AG04449 (cell line): ENCODE measurements at regions of chr10 and their contacts with region 1.

Region 1: GRCh38 chr10:68208424-68209042 is 23.4 kb downstream of the ATOH7 start:
- DNase-seq: no peak
- H3K4me3 ChIP-seq: no peak overlapping the region
- CTCF ChIP-seq: peak; percentile 74

Region 2: GRCh38 chr10:67849331-67850011 is 359.1 kb before region 1 on chr10:
- CTCF ChIA-PET with region 1: interaction called, 44 read pairs
- POLR2A ChIA-PET with region 1: no interaction called
- DNase-seq: peak; percentile 69
- H3K4me3 ChIP-seq: peak overlapping the region; percentile 76
- CTCF ChIP-seq: no peak

Region 3: DNA sequence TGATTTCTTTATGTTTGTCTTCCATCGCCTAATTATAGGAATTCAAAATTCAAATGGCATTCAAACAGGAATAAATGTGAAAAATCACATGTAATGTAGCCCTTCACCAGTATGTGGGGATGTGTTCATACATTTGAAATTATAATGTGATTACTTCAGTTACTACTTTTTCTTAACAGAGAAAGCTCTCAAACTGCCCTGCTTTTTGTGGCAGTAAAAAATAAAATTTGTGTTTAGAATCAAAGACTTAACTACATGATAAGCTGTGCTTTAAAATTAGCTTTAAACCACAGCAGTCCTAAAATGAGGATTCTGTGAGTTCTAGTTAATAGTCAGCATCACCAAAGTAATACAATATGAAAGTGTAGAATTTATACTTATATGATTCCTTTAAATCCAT is 125.7 kb before region 1 on chr10:
- CTCF ChIA-PET with region 1: interaction called, 69 read pairs
- POLR2A ChIA-PET with region 1: no interaction called
- DNase-seq: no peak
- H3K4me3 ChIP-seq: no peak overlapping the region
- CTCF ChIP-seq: peak; percentile 53

Region 4: DNA sequence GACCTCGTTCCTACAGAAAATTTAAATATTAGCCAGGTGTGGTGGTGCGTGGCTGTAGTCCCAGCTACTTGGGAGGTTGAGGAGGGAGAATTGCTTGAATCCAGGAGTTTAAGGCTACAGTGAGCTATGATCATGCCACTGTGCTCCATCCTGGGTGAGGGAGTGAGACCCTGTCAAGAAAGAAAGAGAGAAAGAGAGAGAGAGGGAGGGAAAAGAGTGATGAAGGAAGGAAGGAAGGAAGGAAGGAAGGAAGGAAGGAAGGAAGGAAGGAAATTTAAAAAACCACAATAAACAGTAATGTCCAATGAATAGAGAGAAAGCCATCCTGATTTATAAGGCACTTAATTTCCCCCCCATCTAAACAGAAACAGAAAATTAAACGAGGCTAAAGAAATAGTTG is 89.9 kb before region 1 on chr10:
- CTCF ChIA-PET with region 1: no interaction called
- POLR2A ChIA-PET with region 1: no interaction called
- DNase-seq: no peak
- H3K4me3 ChIP-seq: no peak overlapping the region
- CTCF ChIP-seq: no peak

Region 5: DNA sequence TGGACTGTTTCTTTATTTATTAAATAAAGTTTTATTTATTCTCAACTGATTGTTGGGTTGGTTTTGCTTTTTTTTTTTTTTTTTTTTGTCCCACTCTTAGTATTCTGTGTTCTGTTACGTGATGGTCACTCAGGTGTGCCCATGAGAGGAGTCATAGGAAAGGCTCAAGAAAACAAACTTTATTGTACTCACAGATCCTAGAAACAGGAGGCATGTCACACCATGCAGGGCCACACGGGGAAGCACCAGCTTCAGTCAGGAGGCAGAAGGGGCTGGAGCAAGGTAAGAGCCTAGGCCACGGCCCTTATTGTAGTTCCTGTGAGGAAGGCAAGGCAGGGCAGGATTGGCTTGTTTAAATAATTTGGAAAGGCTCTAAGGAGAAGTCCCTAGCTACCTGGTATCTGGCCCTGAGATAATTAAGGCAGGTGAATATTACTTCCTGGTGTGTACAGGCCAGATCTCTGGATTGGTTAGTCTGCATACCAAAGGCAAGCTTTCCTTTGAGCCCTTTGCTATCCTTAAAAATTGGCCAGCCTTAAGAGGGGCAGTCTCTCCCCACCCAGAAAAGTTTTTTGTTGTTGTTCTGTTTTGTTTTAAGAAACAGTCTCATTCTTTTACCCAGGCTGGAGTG is 15.1 kb after region 1 on chr10:
- CTCF ChIA-PET with region 1: interaction called, 79 read pairs
- POLR2A ChIA-PET with region 1: no interaction called
- DNase-seq: no peak
- H3K4me3 ChIP-seq: no peak overlapping the region
- CTCF ChIP-seq: no peak

Region 6: DNA sequence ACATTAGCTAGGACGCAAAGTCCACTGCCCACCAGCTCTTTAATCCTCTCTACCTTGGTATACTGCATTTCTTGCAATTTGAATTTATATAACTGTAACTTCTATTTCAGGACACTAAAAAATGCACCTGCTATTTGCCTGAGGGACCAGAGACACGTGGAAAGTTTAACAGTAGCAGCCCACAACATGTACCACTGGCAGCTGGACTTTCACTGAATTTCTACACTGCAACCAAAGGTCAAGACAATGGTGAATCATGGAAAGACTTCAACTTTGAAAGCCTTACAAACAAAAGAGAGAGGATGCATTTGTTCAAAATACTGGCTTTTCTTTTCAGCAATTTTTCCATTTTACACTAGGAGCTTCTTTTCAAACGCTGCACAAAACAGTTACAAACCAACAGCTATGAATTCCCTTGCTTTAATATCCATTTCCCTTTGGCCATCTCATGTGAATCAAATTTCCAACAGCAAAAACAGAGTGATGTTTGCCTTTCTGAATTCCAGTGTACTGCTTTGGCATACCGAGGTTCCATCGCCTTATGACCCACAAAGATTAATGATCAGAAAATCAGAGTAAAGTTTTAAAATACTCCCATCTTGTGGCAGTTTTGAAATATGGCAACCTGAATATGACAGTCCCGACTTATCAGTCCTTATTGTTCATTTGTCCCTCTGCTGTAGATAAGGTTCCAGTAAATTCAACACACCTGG is 93.4 kb after region 1 on chr10:
- CTCF ChIA-PET with region 1: interaction called, 199 read pairs
- POLR2A ChIA-PET with region 1: no interaction called
- DNase-seq: peak; percentile 28
- H3K4me3 ChIP-seq: no peak overlapping the region
- CTCF ChIP-seq: peak; percentile 28

Region 7: GRCh38 chr10:68348265-68348741 is 139.8 kb after region 1 on chr10:
- CTCF ChIA-PET with region 1: interaction called, 13 read pairs
- POLR2A ChIA-PET with region 1: no interaction called
- DNase-seq: no peak
- H3K4me3 ChIP-seq: no peak overlapping the region
- CTCF ChIP-seq: peak; percentile 86

Region 8: DNA sequence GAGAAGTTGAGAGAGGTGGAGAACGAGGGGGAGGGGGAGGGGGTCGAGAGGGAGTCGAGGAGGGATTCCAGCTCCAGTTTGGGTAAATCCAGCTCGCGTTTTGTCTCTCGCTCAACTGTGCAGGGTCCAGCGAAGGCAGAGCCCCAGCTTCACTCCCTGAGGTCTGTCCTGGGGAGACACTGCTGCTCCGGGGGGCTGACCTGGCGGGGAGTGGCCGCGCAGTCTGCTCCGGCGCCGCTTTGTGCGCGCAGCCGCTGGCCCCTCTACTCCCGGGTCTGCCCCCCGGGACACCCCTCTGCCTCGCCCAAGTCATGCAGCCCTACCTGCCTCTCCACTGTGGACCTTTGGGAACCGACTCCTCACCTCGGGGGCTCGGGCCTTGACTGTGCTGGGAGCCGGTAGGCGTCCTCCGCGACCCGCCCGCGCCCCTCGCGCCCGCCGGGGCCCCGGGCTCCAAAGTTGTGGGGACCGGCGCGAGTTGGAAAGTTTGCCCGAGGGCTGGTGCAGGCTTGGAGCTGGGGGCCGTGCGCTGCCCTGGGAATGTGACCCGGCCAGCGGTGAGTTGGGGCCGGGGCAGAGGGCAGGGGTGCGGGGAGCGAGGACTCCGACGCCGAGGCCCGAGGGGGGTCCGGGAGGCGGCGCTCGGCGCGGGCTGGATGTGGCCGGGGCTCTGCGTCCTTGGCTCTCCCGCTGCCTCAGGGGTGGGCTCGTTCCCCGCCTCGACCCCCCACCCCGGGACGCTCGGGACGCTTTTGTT is 351.8 kb after region 1 on chr10 and contains the start of gene TET1:
- CTCF ChIA-PET with region 1: no interaction called
- POLR2A ChIA-PET with region 1: no interaction called
- DNase-seq: no peak
- H3K4me3 ChIP-seq: peak within 1 kb of the TSS; percentile 80
- CTCF ChIP-seq: no peak

Region 9: DNA sequence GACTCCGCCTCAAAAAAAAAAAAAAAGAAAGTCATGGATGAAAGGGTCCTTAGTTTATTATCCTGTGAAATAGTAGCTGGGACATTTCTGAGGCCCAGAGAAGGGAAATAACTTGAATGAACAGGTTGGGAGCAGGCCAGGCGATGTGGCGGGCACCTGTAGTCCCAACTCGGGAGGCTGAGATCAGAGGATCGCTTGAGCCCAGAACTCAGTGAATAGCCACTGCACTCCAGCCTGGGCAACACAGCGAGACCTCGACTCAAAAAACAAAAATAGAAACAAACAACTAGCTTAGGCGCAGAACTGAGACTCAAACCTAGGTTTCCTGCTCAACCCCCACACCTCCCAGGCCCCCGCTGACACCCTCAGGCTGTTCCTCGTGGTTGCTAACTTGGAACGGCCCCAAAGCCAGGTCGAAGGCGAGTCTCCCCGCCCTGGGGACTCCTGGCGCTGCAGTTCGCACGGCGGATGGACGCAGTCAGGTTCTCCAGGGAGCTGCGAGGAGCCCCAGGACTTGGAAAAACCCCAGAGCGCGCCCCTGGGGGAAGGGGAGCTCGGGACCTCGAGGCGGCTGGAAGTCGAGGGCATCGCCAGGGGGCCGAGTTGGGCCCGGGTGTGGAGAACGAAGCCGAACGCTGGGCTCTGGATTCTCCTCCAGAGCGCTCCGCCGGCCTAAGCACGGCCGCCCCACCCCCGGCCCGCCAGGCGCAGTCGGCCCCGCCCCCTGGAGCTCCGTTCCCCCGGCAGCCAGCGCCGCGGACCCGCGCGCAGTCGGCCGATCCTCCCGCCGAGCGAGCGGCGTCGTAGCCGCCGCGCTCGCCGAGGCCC is 618.4 kb after region 1 on chr10 and contains the start of gene STOX1:
- CTCF ChIA-PET with region 1: no interaction called
- POLR2A ChIA-PET with region 1: no interaction called
- DNase-seq: no peak
- H3K4me3 ChIP-seq: peak within 1 kb of the TSS; percentile 58
- CTCF ChIP-seq: no peak